ENCODE measurements at regions of chr11 and their contacts with region 1.

Region 1: DNA sequence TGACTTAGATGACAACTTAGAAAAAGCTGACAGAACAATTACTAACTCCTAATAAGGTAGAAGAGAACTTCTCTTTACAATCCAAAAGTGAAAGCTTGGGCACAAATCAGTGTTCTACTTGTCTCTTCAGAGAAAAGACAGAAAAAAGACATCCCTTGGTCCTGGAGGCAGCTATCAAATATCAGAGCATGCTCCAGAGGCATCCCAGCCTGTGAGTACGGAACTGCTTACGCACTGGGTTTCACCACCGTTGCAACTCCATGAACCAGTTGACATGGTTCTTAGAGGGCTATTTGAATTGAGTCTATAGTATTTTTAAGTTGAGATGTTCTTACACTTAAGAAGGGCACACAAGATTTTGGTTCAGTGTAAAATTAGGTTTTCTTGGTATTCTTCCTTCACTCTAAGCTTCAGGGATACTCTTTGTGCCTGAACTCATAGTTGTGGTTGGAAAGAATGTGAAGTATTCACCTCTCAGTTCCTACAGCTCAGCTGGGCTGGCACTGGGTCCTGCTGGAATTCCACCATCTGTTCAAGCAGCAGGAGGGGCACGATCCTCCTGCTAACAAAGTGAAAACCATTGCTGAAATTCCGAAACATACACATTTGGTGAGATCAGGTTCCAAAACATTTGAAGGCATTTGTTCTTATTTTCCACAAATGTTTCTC is 6.3 kb downstream of the AKIP1 start:
- DNase-seq: peak in 1 of 2 experiments; percentile 34
- H3K4me3 ChIP-seq: no peak overlapping the region
- H3K4me3 Mint-ChIP-seq: no peak overlapping the region
- H3K27ac Mint-ChIP-seq: peak overlapping the region; percentile 35
- H3K4me1 ChIP-seq: no peaks in the 10 kb centered on the region
- H3K4me1 Mint-ChIP-seq: peaks cover 12% of the 10 kb centered on the region
- H3K27me3 ChIP-seq: no peaks in the 10 kb centered on the region
- H3K27me3 Mint-ChIP-seq: no peaks in the 10 kb centered on the region
- CTCF ChIP-seq: no peak

Region 2: DNA sequence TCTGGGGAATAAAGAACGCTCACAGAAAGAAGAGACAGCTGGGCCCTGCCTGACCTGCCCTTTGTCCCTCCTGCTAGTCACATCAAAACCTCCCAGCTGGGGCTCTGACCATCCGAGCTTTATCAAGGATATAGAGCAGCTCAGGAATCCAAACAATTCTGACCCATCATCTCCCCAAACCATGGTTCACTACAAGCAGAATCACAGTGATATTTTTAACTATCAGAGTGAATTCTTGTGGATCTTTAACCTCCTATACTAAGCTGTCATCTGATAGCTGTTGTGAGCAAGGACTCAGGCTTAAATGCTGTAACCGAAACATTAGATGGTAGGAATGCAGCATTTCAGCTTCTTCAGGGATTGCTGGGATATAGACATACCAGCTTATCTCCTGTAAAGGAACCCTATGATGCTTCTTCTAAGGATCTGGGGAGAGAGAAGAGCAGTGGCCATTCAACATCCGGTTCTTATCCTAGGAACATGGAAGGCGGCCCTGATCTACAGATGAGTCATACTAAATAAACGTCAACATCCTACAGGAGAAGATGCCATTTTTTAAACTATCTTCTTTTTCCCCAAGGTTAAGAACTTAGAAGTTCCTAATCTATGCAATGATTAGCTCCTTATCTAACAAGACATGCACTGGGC is 91.0 kb before region 1 on chr11:
- CTCF ChIA-PET with region 1: no interaction called
- POLR2A ChIA-PET with region 1: no interaction called
- intact Hi-C with region 1: no loop called
- DNase-seq: peak; percentile 41 to 75
- H3K4me3 ChIP-seq: no peak overlapping the region
- H3K4me3 Mint-ChIP-seq: no peak overlapping the region
- H3K27ac Mint-ChIP-seq: no peak overlapping the region
- H3K4me1 ChIP-seq: peaks cover 31% of the 10 kb centered on the region
- H3K4me1 Mint-ChIP-seq: no peaks in the 10 kb centered on the region
- H3K27me3 ChIP-seq: no peaks in the 10 kb centered on the region
- H3K27me3 Mint-ChIP-seq: no peaks in the 10 kb centered on the region
- CTCF ChIP-seq: no peak

Region 3: DNA sequence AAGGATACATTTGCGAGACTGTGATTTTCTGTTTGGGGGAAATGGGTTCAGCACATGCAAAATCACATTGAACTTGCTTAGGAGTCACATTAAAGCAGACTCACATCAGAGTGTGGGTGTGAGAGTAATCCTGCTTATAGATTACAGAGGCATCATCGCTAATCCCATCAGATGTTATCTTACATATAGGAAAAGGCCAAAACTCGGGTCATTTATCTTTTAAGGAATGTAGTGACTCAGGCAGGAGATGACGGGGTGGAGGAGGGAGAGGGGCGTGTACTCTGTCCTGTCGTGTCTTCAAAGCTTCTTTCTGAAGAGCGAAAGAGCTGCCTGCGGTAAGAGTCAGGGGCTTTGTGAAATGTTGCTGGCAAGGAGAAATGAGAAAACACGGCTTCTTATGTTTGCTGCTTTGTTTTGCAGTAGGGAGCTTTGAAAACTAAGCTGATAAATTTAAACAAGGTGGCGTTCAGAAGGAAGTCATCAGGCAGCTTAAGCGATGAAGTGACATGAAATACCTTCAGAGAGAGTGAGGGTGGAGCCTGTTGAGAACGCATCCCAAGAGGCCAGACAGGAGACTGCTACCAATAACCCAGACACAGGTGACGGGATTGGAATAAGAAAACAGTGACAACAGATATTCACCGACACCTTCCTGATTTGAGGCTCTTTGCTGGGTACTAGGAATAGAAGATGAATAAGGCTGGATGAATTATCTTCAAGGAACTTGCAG is 17.6 kb after region 1 on chr11:
- CTCF ChIA-PET with region 1: interaction called, 9 read pairs
- POLR2A ChIA-PET with region 1: no interaction called
- intact Hi-C with region 1: loop called (anchors 2 kb)
- DNase-seq: peak; percentile 74 to 78
- H3K4me3 ChIP-seq: peak overlapping the region; percentile 23
- H3K4me3 Mint-ChIP-seq: peak overlapping the region; percentile 79
- H3K27ac Mint-ChIP-seq: peak overlapping the region; percentile 85
- H3K4me1 ChIP-seq: peaks cover 22% of the 10 kb centered on the region
- H3K4me1 Mint-ChIP-seq: peaks cover 10% of the 10 kb centered on the region
- H3K27me3 ChIP-seq: no peaks in the 10 kb centered on the region
- H3K27me3 Mint-ChIP-seq: no peaks in the 10 kb centered on the region
- CTCF ChIP-seq: no peak